Activated naive CD4-positive, alpha-beta T cell treated with anti-CD3 and anti-CD28 coated beads for 36 hours (primary cell): ENCODE measurements at regions of chr2 and their contacts with region 1.

Region 1: DNA sequence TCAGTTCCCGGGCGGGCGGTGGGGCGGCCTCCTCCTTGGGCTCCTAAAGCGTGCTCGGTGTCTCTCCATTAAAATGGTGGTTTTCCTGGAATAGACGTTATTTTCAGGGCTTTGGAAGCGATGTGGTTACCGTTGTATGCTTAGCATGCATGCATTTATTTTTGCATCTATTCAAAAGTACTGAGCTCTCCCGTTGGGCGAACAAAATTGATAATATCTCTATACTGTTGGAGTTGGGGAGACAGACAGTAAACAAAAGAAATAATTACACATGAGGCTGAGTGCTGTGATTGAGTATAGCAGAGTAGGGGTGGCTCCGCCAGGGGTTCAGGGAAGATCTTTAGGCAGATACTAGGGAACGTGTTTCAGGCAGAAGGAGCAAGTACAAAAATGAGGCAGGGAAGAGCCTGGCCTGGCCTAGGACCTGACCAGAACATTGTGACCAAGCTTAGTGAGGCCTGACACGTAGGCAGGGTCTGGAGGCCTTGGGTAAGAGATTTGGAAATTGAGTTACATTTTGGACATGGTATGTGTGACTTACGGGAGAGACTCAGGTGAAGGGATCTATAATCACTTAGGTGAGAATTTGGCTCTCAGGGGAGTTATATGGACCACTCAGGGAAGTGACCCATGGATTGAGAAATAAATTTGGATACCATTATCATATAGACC is 674 bp downstream of the NCAPH start:
- DNase-seq: no peak
- H3K4me3 Mint-ChIP-seq: peak overlapping the region; percentile 87
- H3K27ac Mint-ChIP-seq: peak overlapping the region; percentile 72
- H3K4me1 Mint-ChIP-seq: peaks cover 51% of the 10 kb centered on the region
- H3K27me3 Mint-ChIP-seq: no peaks in the 10 kb centered on the region

Region 2: DNA sequence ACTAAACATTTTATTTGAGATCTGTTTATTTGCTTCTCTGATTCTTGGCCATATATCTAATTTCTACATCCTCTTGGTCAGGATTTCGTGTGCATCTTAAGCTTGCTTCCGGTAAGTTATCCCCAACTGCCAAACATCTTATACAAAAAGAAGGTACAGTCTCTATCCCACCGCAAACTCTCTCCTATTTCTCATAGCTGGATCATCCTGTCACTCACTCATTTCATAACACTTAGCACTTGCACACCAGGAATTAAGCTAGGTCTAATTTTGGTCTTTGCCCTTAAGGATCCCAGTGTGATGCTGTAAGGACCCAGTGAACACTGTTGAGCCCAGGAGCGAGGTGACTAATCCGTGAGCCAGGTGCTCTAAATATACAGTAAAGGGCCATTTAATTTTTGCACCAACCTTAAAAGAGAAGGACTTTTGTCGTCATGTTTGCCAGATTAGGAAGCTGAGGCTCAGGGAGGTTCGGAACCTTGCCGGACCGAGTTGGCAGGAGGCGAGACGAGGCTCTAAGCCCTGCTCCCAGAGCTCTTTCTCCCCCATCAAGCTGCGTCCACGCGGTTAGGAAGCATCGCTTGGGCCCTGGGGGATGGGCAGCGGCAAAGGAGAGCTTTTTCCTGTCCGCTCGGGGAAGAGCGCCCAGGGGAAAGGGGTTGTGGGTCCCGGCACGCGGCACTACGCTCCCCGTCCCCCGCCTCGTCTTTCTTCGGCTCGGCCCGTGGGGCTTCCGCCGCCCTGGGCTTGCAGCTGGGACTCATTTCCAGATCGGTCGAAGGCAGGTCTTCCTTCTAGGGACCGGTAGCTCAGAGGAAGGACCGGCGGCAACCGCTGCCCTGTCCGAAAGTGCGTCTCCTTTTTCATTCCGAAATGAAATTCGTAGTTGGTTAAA is 15.3 kb before region 1 on chr2:
- CTCF ChIA-PET with region 1: interaction called, 5 read pairs
- intact Hi-C with region 1: loop called (anchors 1 kb)
- DNase-seq: peak; percentile 36
- H3K4me3 Mint-ChIP-seq: peak overlapping the region; percentile 88
- H3K27ac Mint-ChIP-seq: peak overlapping the region; percentile 39
- H3K4me1 Mint-ChIP-seq: peaks cover 41% of the 10 kb centered on the region
- H3K27me3 Mint-ChIP-seq: peaks cover 2% of the 10 kb centered on the region

Region 3: DNA sequence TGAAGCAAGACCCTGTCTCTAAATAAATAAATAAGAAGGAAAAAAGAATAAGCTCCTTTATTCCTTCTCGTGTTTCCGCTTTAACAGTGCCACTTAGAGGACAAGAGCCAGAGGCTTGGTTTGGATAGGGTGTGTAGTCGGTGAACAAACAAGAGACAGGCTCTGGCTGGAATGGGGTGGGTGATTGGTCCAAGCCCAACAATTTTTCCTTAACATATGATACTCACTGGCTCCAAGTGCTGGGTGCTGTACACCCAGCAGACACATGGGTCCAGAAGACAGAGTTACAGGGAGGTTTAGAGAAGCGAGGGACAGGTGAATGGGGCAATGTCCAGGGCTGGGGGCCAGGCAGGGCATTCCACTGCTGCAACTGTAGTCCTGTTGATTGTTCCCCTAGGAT is 77.1 kb after region 1 on chr2:
- CTCF ChIA-PET with region 1: no interaction called
- intact Hi-C with region 1: no loop called
- DNase-seq: no peak
- H3K4me3 Mint-ChIP-seq: no peak overlapping the region
- H3K27ac Mint-ChIP-seq: no peak overlapping the region
- H3K4me1 Mint-ChIP-seq: peaks cover 7% of the 10 kb centered on the region
- H3K27me3 Mint-ChIP-seq: no peaks in the 10 kb centered on the region

Region 4: DNA sequence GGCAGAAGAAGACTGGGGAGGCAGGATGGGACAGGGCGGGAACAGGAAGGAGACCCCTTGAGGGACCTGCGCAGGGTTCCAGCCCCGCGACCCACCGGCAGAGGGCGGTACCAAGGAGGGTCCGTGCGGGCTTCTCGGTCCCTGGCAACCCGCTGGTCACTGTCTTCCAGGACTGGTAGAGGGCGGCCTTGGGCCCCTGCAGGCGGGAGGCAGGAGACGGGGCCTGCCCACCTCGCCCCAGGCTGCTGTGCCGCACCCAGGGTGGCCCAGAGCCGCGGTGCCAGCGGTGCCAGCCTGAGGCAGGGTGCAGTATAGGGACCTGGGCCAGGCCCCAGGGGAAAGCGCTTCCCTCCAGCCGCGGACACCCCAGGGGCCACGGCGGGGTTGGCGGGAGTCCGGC is 134.4 kb after region 1 on chr2:
- CTCF ChIA-PET with region 1: no interaction called
- intact Hi-C with region 1: no loop called
- DNase-seq: peak; percentile 64
- H3K4me3 Mint-ChIP-seq: no peak overlapping the region
- H3K27ac Mint-ChIP-seq: no peak overlapping the region
- H3K4me1 Mint-ChIP-seq: peaks cover 7% of the 10 kb centered on the region
- H3K27me3 Mint-ChIP-seq: peaks cover 7% of the 10 kb centered on the region